ENCODE measurements at regions of chr1 and their contacts with region 1.

Region 1: DNA sequence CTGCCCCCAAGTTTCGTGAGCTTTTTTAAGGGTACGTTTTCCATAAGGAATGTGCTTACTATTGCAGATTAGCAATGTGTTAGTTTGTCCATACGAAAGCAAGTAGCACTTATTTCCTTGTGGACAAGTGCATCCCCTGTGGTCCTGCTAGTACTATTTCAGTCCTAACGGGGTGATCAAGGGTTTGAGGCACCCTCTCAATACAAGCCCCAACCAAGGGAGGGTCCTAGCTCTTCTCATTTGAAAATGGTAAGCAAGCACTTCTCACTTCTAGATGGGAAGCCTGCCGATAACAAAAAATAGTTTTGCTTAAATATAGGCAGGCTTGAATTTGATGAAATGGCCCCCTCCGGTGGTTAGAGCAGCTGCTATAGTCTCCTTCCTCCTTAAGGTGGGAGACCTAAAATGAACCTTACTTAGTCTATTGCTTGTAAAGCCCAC is 64.0 kb upstream of the HMCN1 start:
- DNase-seq: peak; percentile 79
- ATAC-seq: peak; percentile 82
- H3K4me3 Mint-ChIP-seq: no peak overlapping the region
- H3K27ac Mint-ChIP-seq: peak overlapping the region; percentile 31
- H3K4me1 Mint-ChIP-seq: peaks cover 23% of the 10 kb centered on the region
- H3K27me3 Mint-ChIP-seq: no peaks in the 10 kb centered on the region
- CTCF ChIP-seq: peak; percentile 61

Region 2: GRCh38 chr1:185238447-185238846 is 431.8 kb before region 1 on chr1:
- CTCF ChIA-PET with region 1: interaction called, 7 read pairs
- POLR2A ChIA-PET with region 1: no interaction called
- intact Hi-C with region 1: loop called (anchors 10 kb)
- DNase-seq: no peak
- ATAC-seq: peak; percentile 64
- H3K4me3 Mint-ChIP-seq: no peak overlapping the region
- H3K27ac Mint-ChIP-seq: no peak overlapping the region
- H3K4me1 Mint-ChIP-seq: peaks cover 26% of the 10 kb centered on the region
- H3K27me3 Mint-ChIP-seq: no peaks in the 10 kb centered on the region
- CTCF ChIP-seq: peak; percentile 48

Region 3: DNA sequence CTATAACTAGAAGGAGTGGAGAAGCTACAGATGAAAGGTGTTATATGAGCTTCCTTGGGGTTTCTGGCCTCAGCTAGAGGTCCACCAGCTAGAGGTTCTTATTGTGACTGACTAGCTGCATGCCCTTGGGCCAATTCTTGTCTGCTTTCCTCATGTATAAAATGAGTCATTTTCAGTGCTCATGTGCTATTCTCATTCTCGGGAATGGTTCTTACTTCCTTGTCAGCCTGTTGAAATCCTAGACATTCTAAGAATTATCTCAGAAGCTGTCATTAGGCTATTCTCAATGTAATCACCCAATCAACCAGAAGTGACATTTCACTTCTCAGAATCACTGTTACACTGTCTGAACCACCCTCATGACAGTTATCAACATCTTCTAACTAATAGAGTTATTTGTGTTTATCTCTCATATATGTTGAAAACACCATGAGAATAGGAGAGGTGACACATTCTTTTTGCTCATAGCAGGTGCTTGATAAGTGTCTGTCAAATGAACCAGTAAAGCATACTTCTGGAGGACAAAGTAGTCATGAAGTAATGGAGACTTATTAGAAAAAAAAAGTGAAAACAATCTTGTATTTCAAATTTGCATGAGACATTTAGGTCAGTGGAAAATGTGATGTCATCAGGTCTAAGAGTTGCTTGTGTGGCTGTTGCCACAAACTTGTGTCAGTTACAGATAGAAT is 230.3 kb before region 1 on chr1:
- CTCF ChIA-PET with region 1: interaction called, 4 read pairs
- POLR2A ChIA-PET with region 1: no interaction called
- intact Hi-C with region 1: loop called (anchors 10 kb)
- DNase-seq: peak; percentile 77
- ATAC-seq: peak; percentile 87
- H3K4me3 Mint-ChIP-seq: no peak overlapping the region
- H3K27ac Mint-ChIP-seq: no peak overlapping the region
- H3K4me1 Mint-ChIP-seq: peaks cover 16% of the 10 kb centered on the region
- H3K27me3 Mint-ChIP-seq: no peaks in the 10 kb centered on the region
- CTCF ChIP-seq: no peak

Region 4: GRCh38 chr1:185559684-185560331 is 110.4 kb before region 1 on chr1:
- CTCF ChIA-PET with region 1: interaction called, 7 read pairs
- POLR2A ChIA-PET with region 1: no interaction called
- intact Hi-C with region 1: loop called (anchors 10 kb)
- DNase-seq: peak; percentile 81
- ATAC-seq: peak; percentile 94
- H3K4me3 Mint-ChIP-seq: no peak overlapping the region
- H3K27ac Mint-ChIP-seq: peak overlapping the region; percentile 83
- H3K4me1 Mint-ChIP-seq: peaks cover 36% of the 10 kb centered on the region
- H3K27me3 Mint-ChIP-seq: no peaks in the 10 kb centered on the region
- CTCF ChIP-seq: peak; percentile 39

Region 5: DNA sequence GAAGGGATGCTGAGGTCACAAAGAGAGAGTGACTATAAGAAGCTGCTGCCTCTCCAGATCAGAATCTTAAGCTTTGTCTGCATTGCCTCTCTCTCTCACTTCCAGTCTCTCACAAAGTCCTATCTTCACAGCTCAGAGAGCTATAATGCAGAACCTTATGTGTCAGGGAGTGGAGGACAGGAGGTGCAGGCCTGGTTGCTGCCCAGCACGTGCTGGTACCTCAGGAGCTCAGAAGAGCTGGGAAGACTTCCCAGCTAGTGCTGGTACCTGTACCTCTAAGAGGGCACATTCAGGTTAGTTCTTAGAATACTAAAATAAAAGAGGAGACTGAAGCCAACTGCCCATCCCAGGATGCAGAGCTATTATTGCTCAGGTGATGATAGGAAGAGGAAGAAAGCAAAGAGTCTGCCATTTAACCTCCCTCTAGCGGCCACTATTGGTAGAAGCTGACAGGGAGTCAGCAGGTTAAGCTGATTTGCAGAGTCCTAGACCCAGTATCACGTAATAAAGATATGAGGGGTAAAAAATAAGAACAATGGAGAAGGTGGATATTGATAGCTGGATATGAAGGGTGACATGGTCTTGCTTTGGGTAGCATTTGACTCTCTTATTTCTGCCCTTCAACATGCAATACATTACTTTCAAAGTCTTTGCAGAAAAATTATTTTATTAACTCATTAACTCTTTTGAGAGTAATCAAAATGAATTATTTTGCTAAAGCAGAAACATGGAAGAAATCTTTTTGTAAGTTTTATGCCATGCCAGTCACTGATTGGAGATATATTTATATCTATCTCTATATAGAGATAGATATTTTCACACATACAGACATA is 74.2 kb before region 1 on chr1:
- CTCF ChIA-PET with region 1: interaction called, 10 read pairs
- POLR2A ChIA-PET with region 1: no interaction called
- intact Hi-C with region 1: no loop called
- DNase-seq: peak; percentile 64
- ATAC-seq: peak; percentile 82
- H3K4me3 Mint-ChIP-seq: no peak overlapping the region
- H3K27ac Mint-ChIP-seq: no peak overlapping the region
- H3K4me1 Mint-ChIP-seq: peaks cover 14% of the 10 kb centered on the region
- H3K27me3 Mint-ChIP-seq: no peaks in the 10 kb centered on the region
- CTCF ChIP-seq: peak; percentile 54

Region 6: DNA sequence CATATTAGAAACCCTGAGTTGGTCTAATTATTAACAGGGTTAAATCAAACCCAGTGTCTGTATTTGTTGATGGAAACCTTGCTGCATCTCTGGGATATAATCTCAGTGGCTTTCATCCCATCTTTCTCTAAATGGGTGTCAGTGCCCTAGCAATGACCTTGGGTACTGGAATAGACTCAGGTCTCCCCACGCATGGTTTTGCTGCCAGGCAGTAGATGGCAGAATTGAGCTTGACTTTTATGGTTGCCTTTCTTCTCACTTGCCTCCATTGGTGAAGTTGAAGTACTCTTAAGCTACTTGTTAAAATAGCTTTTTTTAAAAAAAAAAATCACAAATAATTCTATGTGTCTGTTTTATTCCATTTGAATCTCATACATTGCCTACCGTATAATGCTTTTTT is 17.9 kb before region 1 on chr1:
- CTCF ChIA-PET with region 1: interaction called, 16 read pairs
- POLR2A ChIA-PET with region 1: no interaction called
- intact Hi-C with region 1: no loop called
- DNase-seq: peak; percentile 15
- ATAC-seq: no peak
- H3K4me3 Mint-ChIP-seq: no peak overlapping the region
- H3K27ac Mint-ChIP-seq: no peak overlapping the region
- H3K4me1 Mint-ChIP-seq: peaks cover 9% of the 10 kb centered on the region
- H3K27me3 Mint-ChIP-seq: no peaks in the 10 kb centered on the region
- CTCF ChIP-seq: peak; percentile 2

Region 7: GRCh38 chr1:185681034-185681633 is 10.9 kb after region 1 on chr1:
- CTCF ChIA-PET with region 1: interaction called, 52 read pairs
- POLR2A ChIA-PET with region 1: no interaction called
- intact Hi-C with region 1: no loop called
- DNase-seq: peak; percentile 22
- ATAC-seq: peak; percentile 71
- H3K4me3 Mint-ChIP-seq: no peak overlapping the region
- H3K27ac Mint-ChIP-seq: no peak overlapping the region
- H3K4me1 Mint-ChIP-seq: peaks cover 21% of the 10 kb centered on the region
- H3K27me3 Mint-ChIP-seq: no peaks in the 10 kb centered on the region
- CTCF ChIP-seq: peak; percentile 68

Region 8: GRCh38 chr1:185886671-185887070 is 216.5 kb after region 1 on chr1:
- CTCF ChIA-PET with region 1: no interaction called
- POLR2A ChIA-PET with region 1: no interaction called
- intact Hi-C with region 1: no loop called
- DNase-seq: no peak
- ATAC-seq: no peak
- H3K4me3 Mint-ChIP-seq: no peak overlapping the region
- H3K27ac Mint-ChIP-seq: no peak overlapping the region
- H3K4me1 Mint-ChIP-seq: no peaks in the 10 kb centered on the region
- H3K27me3 Mint-ChIP-seq: no peaks in the 10 kb centered on the region
- CTCF ChIP-seq: no peak

Measured in activated CD8-positive, alpha-beta T cell treated with anti-CD3 and anti-CD28 coated beads for 36 hours (primary cell).